Left lung (tissue), 14 donors: ENCODE measurements at regions of chr12 and their contacts with region 1.

Region 1: DNA sequence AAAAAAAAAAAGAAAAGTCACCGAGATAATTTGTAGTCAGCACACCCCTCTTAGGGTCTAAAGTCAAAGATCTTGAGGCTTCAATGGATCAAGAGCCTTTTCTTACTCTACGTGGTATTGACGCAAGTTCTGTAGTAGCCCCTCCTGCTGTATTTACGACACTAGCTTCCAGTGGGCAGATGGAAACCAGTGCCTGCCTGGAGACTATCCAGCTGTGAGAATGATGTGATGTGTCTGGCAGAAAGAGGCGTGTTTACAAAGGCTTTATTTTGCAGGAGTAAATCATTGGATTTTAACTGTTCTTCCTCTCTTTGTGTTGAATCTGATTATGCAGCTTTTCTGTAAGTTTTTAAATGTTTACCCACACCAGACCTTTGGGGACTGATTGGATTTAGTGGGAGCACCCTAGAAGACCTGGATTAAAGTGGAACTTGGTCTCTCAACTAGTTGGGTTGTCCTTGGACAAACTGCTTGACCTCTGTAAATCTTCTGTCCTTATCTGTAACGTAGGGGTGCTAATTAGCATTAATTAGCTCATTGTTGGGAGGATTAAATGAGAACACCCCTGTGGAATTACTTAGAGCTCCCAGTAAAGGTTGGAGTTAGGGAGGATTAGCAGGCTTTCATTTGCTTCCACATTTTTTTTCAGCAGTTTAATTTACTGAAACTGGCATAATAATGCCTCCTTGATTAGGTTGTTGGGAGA is 72.4 kb downstream of the RASSF3 start:
- DNase-seq: peak in 2 of 4 donors; percentile 70 to 84
- ATAC-seq: no peak
- H3K4me3 ChIP-seq: no peak overlapping the region
- H3K27ac ChIP-seq: peak overlapping the region in 1 of 2 donors; percentile 63
- H3K4me1 ChIP-seq: peaks cover 16 to 84% of the 10 kb centered on the region in 2 donors
- H3K27me3 ChIP-seq: no peaks in the 10 kb centered on the region
- CTCF ChIP-seq: no peak

Region 2: GRCh38 chr12:64551698-64552097 is 131.0 kb before region 1 on chr12:
- intact Hi-C with region 1: loop called in 1 of 2 experiments (anchors 10 kb)
- DNase-seq: no peak
- ATAC-seq: no peak
- H3K4me3 ChIP-seq: no peak overlapping the region
- H3K27ac ChIP-seq: no peak overlapping the region
- H3K4me1 ChIP-seq: peaks cover 0 to 9% of the 10 kb centered on the region in 2 donors
- H3K27me3 ChIP-seq: no peaks in the 10 kb centered on the region
- CTCF ChIP-seq: no peak

Region 3: GRCh38 chr12:64610149-64610678 is 72.5 kb before region 1 on chr12 and contains the start of gene RASSF3:
- intact Hi-C with region 1: loop called in 1 of 2 experiments (anchors 10 kb)
- DNase-seq: peak; percentile 74 to 96 (median 83)
- ATAC-seq: peak; percentile 82
- H3K4me3 ChIP-seq: peak within 1 kb of the TSS; percentile 76 to 96
- H3K27ac ChIP-seq: peak within 1 kb of the TSS; percentile 93 to 99
- H3K4me1 ChIP-seq: peaks cover 7 to 52% of the 10 kb centered on the region in 2 donors
- H3K27me3 ChIP-seq: no peaks in the 10 kb centered on the region
- CTCF ChIP-seq: no peak
- polyA plus RNA-seq, gene RASSF3: 30.3 to 38.0 (median 33.5) TPM